Mammary epithelial cell (primary cell): ENCODE measurements at regions of chr4 and their contacts with region 1.

Region 1: GRCh38 chr4:55546756-55547465 is at the start of gene CLOCK:
- DNase-seq: peak; percentile 84
- H3K4me3 ChIP-seq: peak within 1 kb of the TSS; percentile 66 to 84 (median 77)
- H3K27ac ChIP-seq: peak within 1 kb of the TSS; percentile 87
- H3K4me1 ChIP-seq: peaks cover 45% of the 10 kb centered on the region
- H3K27me3 ChIP-seq: no peaks in the 10 kb centered on the region
- CTCF ChIP-seq: peak in 1 of 2 donors; percentile 51
- total RNA-seq, gene CLOCK: 29.3 to 35.3 TPM

Region 2: GRCh38 chr4:55184600-55185523 is 362.0 kb before region 1 on chr4:
- CTCF ChIA-PET with region 1: no interaction called
- dilution Hi-C with region 1: no loop called
- in situ Hi-C with region 1: no loop called
- intact Hi-C with region 1: loop called (anchors 2 kb)
- DNase-seq: no peak
- H3K4me3 ChIP-seq: no peak overlapping the region
- H3K27ac ChIP-seq: peak overlapping the region; percentile 45
- H3K4me1 ChIP-seq: peaks cover 20% of the 10 kb centered on the region
- H3K27me3 ChIP-seq: no peaks in the 10 kb centered on the region
- CTCF ChIP-seq: peak; percentile 51 to 77

Region 3: DNA sequence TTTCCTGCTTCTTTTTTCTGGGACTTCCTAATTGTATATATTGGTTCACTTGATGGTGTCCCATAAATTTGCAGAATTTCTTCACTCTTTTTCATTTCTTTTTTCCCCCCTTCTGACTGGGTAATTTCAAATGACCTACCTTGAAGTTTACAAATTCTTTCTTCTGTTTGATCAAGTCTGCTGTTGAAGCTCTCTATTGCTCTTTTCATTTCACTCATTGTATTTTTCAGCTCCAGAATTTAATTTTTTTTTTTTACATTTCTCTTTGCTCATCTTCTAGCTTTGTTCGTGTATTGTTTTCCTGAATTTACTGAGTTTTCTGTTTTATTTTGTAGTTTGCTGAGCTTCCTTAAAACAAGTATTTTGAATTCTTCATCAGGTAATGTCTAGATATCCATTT is 262.6 kb before region 1 on chr4:
- CTCF ChIA-PET with region 1: no interaction called
- dilution Hi-C with region 1: no loop called
- in situ Hi-C with region 1: no loop called
- intact Hi-C with region 1: no loop called
- DNase-seq: no peak
- H3K4me3 ChIP-seq: no peak overlapping the region
- H3K27ac ChIP-seq: no peak overlapping the region
- H3K4me1 ChIP-seq: no peaks in the 10 kb centered on the region
- H3K27me3 ChIP-seq: no peaks in the 10 kb centered on the region
- CTCF ChIP-seq: no peak

Region 4: DNA sequence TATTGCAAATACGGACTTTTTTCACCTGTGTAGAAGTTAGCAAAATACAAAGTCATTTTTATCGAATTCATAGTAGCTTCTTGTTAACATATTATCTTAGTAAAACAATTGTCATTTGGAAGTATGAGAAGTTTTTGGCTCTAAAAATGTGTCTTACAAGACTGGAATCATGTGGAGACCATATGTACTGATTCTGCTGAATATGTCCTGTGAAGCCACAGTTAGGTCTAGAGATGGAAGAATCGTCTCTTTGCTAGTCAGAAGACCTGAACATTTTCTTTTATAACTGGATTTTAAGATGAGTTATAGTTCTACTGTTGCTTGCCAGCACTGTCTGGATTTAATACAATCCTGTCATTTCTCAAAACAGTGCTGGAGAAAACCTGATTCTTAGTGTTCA is 122.1 kb before region 1 on chr4:
- CTCF ChIA-PET with region 1: no interaction called
- dilution Hi-C with region 1: no loop called
- in situ Hi-C with region 1: no loop called
- intact Hi-C with region 1: no loop called
- DNase-seq: no peak
- H3K4me3 ChIP-seq: no peak overlapping the region
- H3K27ac ChIP-seq: no peak overlapping the region
- H3K4me1 ChIP-seq: peaks cover 4% of the 10 kb centered on the region
- H3K27me3 ChIP-seq: no peaks in the 10 kb centered on the region
- CTCF ChIP-seq: no peak

Region 5: GRCh38 chr4:55458164-55458563 is 88.7 kb before region 1 on chr4:
- CTCF ChIA-PET with region 1: no interaction called
- dilution Hi-C with region 1: loop called (anchors 5 kb)
- in situ Hi-C with region 1: no loop called
- intact Hi-C with region 1: no loop called
- DNase-seq: no peak
- H3K4me3 ChIP-seq: no peak overlapping the region
- H3K27ac ChIP-seq: no peak overlapping the region
- H3K4me1 ChIP-seq: peaks cover 4% of the 10 kb centered on the region
- H3K27me3 ChIP-seq: no peaks in the 10 kb centered on the region
- CTCF ChIP-seq: no peak

Region 6: DNA sequence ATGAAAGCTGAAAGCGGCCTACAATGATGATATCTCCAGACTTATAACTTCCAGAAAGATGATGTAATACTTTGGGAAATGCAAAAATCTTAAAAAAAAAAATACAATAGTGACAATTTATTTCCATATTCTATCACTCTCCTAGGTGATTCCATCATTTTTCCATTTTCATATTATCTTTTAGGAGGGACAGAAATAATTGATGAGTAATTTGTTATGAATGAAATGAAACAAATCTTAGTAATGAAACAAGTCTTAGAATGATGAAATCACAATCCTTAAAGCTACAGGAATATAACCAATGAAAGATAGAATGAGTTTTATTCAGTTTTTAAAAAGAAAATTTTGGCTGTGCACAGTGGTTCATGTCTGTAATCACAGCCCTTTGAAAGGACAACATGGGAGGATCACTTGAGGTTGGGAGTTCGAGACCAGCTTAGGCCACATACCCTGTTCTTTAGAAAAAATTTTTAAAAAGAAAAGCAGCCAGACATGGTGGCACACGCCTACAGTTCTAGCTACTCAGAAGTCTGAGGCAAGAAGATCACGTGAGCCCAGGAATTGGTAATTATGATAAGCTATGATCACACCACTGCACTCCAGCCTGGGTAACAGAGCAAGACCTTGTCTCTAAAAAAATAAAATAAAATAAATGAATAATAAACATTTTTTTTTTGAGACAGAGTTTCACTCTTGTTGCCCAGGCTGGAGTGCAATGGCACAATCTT is 21.9 kb before region 1 on chr4:
- CTCF ChIA-PET with region 1: no interaction called
- dilution Hi-C with region 1: no loop called
- in situ Hi-C with region 1: no loop called
- intact Hi-C with region 1: loop called (anchors 1 kb)
- DNase-seq: peak; percentile 24
- H3K4me3 ChIP-seq: no peak overlapping the region
- H3K27ac ChIP-seq: peak overlapping the region; percentile 54
- H3K4me1 ChIP-seq: peaks cover 4% of the 10 kb centered on the region
- H3K27me3 ChIP-seq: no peaks in the 10 kb centered on the region
- CTCF ChIP-seq: no peak

Region 7: DNA sequence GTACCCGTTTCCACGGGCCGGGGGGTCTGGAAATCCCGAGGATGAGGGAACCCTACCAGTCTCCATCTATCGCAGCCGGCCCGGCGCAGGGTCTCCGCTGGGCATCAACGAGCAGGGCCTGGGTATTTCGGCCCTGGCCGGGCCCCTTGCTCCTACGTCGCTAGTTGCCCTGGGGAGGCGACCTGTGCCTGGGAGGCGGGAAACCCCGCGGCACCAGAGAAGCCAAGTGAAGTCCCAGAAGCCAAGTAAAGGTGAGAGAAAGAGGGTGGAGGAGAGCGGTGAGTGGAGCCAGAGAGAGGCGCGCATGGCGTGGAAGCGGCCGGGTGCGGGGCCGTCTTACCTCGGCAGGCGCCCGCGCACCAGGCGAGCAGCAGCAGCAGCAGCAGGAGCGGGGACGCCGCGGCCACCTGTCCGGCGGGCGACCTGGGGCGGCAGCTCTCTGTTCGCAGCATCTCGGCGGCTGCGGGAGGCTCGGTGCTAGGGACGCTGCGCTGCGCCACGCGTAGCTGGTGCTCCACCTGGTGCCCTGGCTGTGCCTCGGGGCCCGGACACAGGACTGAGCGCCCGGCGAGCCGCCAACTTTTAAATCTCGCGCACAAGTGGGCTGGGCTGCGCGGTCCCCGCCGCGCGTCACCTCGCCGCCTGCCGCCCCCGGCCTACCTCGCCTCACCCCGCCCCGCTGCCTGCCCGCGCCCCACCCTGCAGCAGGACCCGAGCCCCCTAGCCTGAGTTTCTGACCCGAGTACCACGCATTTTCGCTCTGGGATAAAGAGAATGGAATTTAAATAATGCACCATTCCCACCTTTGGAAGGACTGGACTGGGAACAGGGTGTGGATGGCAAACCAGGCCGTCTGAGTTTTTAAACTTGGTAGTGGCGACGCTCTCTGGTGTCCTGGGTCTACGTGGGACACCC is 89.1 kb after region 1 on chr4 and contains the start of gene NMU:
- CTCF ChIA-PET with region 1: no interaction called
- dilution Hi-C with region 1: no loop called
- in situ Hi-C with region 1: no loop called
- intact Hi-C with region 1: loop called (anchors 5 kb)
- DNase-seq: peak; percentile 52
- H3K4me3 ChIP-seq: peak within 1 kb of the TSS; percentile 37 to 63 (median 53)
- H3K27ac ChIP-seq: no peak within 1 kb of the TSS
- H3K4me1 ChIP-seq: peaks cover 10% of the 10 kb centered on the region
- H3K27me3 ChIP-seq: no peaks in the 10 kb centered on the region
- CTCF ChIP-seq: peak in 1 of 2 donors; percentile 38
- total RNA-seq, gene NMU: 1.7 TPM in 1 of 2 donors, not detected in the other